B cell (primary cell): ENCODE measurements at regions of chr19 and their contacts with region 1.

Region 1: DNA sequence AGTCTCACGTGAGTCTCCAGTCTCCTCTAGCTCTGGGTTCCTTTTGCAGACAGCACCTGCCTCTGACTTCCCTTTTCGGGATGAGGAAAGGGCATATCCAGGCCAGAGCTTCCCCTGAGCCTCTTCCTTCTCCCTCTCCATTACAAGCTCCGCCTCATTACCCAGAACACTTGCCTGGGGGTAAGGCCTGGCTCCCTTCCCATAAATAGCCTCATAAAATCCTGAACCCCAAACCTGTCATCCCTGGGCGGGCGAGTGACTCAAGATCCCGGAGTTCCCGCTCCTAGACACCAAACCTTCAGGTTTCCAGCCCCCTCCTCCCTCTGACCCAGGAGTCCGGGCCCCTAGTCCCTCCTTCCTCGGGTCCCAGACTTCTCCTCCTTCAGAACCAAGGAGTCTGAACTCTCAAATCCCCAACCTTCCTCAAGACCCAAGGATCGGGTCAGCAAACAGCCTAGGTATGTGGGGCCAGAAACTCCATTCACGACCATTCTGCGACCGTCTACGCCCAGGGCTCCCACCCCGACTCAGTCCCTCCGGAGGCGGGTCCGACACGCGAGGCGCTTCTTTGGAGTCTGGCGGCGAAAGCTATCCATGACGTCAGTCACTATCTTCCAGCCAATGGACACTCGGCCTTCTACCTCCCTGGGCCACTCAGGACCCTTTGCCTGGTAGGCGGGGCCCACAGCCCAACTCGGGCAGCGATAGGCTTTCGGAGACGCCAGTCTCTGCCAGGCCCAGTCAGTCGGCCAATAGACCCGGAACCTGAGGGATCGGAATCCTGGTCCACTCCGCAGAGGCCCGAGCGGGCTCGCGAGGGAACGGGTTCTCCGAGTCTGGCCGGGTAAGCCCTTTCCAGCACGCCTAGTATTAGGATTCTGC is 6.5 kb upstream of the CNFN start:
- DNase-seq: peak; percentile 95
- ATAC-seq: peak; percentile 97
- H3K4me3 ChIP-seq: peak overlapping the region; percentile 83 to 93 (median 89)
- H3K4me3 Mint-ChIP-seq: peak overlapping the region; percentile 95
- H3K27ac ChIP-seq: peak overlapping the region; percentile 68 to 77
- H3K27ac Mint-ChIP-seq: peak overlapping the region; percentile 95
- H3K4me1 ChIP-seq: peaks cover 22 to 34% of the 10 kb centered on the region in 2 donors
- H3K4me1 Mint-ChIP-seq: peaks cover 39% of the 10 kb centered on the region
- H3K27me3 ChIP-seq: no peaks in the 10 kb centered on the region
- H3K27me3 Mint-ChIP-seq: peaks cover 3% of the 10 kb centered on the region
- CTCF ChIP-seq: no peak

Region 2: GRCh38 chr19:42075616-42076379 is 320.8 kb before region 1 on chr19 and contains the start of gene ZNF574:
- CTCF ChIA-PET with region 1: interaction called, 3 read pairs
- POLR2A ChIA-PET with region 1: interaction called, 3 read pairs
- intact Hi-C with region 1: loop called (anchors 5 kb)
- DNase-seq: peak; percentile 100
- ATAC-seq: peak; percentile 94
- H3K4me3 ChIP-seq: peak within 1 kb of the TSS; percentile 56 to 93 (median 86)
- H3K4me3 Mint-ChIP-seq: peak within 1 kb of the TSS; percentile 97
- H3K27ac ChIP-seq: peak within 1 kb of the TSS; percentile 95 to 99
- H3K27ac Mint-ChIP-seq: peak within 1 kb of the TSS; percentile 99
- H3K4me1 ChIP-seq: peaks cover 20 to 23% of the 10 kb centered on the region in 2 donors
- H3K4me1 Mint-ChIP-seq: peaks cover 35% of the 10 kb centered on the region
- H3K27me3 ChIP-seq: no peaks in the 10 kb centered on the region
- H3K27me3 Mint-ChIP-seq: peaks cover 5% of the 10 kb centered on the region
- CTCF ChIP-seq: no peak
- total RNA-seq, gene ZNF574: 27.4 and 28.4 TPM in 2 replicates

Region 3: GRCh38 chr19:42363614-42364346 is 32.8 kb before region 1 on chr19:
- CTCF ChIA-PET with region 1: interaction called, 18 read pairs
- POLR2A ChIA-PET with region 1: interaction called, 11 read pairs
- intact Hi-C with region 1: loop called (anchors 1 kb)
- DNase-seq: peak; percentile 82
- ATAC-seq: peak; percentile 54
- H3K4me3 ChIP-seq: peak overlapping the region in 1 of 5 experiments; percentile 11
- H3K4me3 Mint-ChIP-seq: peak overlapping the region; percentile 17
- H3K27ac ChIP-seq: peak overlapping the region; percentile 81 to 87
- H3K27ac Mint-ChIP-seq: peak overlapping the region; percentile 86
- H3K4me1 ChIP-seq: peaks cover 38 to 47% of the 10 kb centered on the region in 2 donors
- H3K4me1 Mint-ChIP-seq: peaks cover 47% of the 10 kb centered on the region
- H3K27me3 ChIP-seq: no peaks in the 10 kb centered on the region
- H3K27me3 Mint-ChIP-seq: no peaks in the 10 kb centered on the region
- CTCF ChIP-seq: no peak

Region 4: GRCh38 chr19:43362179-43362578 is 965.6 kb after region 1 on chr19:
- CTCF ChIA-PET with region 1: no interaction called
- POLR2A ChIA-PET with region 1: no interaction called
- intact Hi-C with region 1: no loop called
- DNase-seq: no peak
- ATAC-seq: no peak
- H3K4me3 ChIP-seq: no peak overlapping the region
- H3K4me3 Mint-ChIP-seq: no peak overlapping the region
- H3K27ac ChIP-seq: no peak overlapping the region
- H3K27ac Mint-ChIP-seq: no peak overlapping the region
- H3K4me1 ChIP-seq: no peaks in the 10 kb centered on the region
- H3K4me1 Mint-ChIP-seq: no peaks in the 10 kb centered on the region
- H3K27me3 ChIP-seq: no peaks in the 10 kb centered on the region
- H3K27me3 Mint-ChIP-seq: peaks cover 6% of the 10 kb centered on the region
- CTCF ChIP-seq: no peak